PC-3 (cell line): ENCODE measurements at regions of chr7 and their contacts with region 1.

Region 1: GRCh38 chr7:42315631-42316030 is 78.6 kb upstream of the GLI3 start:
- DNase-seq: peak; percentile 69
- ATAC-seq: peak; percentile 84
- H3K4me3 ChIP-seq: 0 out of 2 replicates have a peak overlapping the region, but pooled peaks have one; percentile 8
- H3K27ac ChIP-seq: no peak overlapping the region
- H3K4me1 ChIP-seq: peaks cover 32% of the 10 kb centered on the region
- H3K27me3 ChIP-seq: no peaks in the 10 kb centered on the region
- CTCF ChIP-seq: no peak

Region 2: GRCh38 chr7:41399171-41399570 is 916.5 kb before region 1 on chr7:
- CTCF ChIA-PET with region 1: no interaction called
- POLR2A ChIA-PET with region 1: no interaction called
- intact Hi-C with region 1: no loop called
- DNase-seq: peak; percentile 83
- ATAC-seq: peak; percentile 60
- H3K4me3 ChIP-seq: no peak overlapping the region
- H3K27ac ChIP-seq: peak overlapping the region; percentile 81
- H3K4me1 ChIP-seq: peaks cover 26% of the 10 kb centered on the region
- H3K27me3 ChIP-seq: no peaks in the 10 kb centered on the region
- CTCF ChIP-seq: no peak

Region 3: GRCh38 chr7:42567051-42567450 is 251.4 kb after region 1 on chr7:
- CTCF ChIA-PET with region 1: no interaction called
- POLR2A ChIA-PET with region 1: no interaction called
- intact Hi-C with region 1: loop called (anchors 5 kb)
- DNase-seq: peak; percentile 68
- ATAC-seq: peak; percentile 84
- H3K4me3 ChIP-seq: no peak overlapping the region
- H3K27ac ChIP-seq: peak overlapping the region; percentile 47
- H3K4me1 ChIP-seq: 0 out of 2 replicates have a peak, but pooled peaks cover 9% of the 10 kb centered on the region
- H3K27me3 ChIP-seq: no peaks in the 10 kb centered on the region
- CTCF ChIP-seq: no peak